T-cell (primary cell): ENCODE measurements at regions of chr14 and their contacts with region 1.

Region 1: DNA sequence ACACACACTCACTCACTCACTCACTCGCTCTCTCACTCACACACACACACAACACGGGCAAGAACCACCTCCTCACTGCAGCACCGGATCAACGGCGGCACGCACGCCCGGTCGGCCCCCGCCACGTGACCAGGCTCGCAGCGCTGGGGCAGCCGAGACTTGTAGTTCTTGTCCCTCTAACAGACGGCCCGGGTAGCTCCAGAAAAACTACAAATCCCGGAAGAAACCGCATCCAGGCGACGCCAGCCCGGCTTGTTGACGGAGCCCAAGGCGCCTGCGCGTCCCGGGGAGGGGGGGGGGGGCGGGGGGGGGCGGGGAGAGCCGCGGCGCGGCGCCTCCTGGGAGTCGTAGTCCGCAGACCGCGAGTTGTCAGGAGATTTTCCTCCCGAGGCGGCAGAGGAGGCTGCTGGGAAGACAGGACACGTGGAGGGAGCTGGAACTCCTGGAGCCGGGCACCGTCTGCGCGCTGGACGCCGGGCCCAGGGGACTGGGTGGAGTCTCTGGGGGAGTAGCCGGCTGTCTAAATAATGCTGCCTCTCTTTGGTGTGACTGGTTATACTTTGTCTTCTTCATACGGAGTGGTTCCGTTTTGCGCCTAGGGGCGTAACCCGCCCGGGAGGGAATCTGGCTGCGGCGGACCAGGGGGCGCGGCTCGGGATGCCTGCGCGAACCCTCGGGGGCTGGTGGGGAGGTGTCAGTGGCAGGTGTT is at the start of gene MAX:
- DNase-seq: peak; percentile 95 to 100 (median 99)
- ATAC-seq: peak; percentile 90 to 93 (median 92)
- H3K4me3 ChIP-seq: peak within 1 kb of the TSS; percentile 92 to 95
- H3K4me3 Mint-ChIP-seq: peak within 1 kb of the TSS; percentile 85 to 98 (median 89)
- H3K27ac ChIP-seq: peak within 1 kb of the TSS; percentile 97
- H3K27ac Mint-ChIP-seq: peak within 1 kb of the TSS; percentile 94 to 96
- H3K4me1 ChIP-seq: peaks cover 17 to 32% of the 10 kb centered on the region in 2 experiments
- H3K4me1 Mint-ChIP-seq: peaks cover 38 to 40% (median 38%) of the 10 kb centered on the region in 3 donors
- H3K27me3 ChIP-seq: no peaks in the 10 kb centered on the region
- H3K27me3 Mint-ChIP-seq: no peaks in the 10 kb centered on the region
- total RNA-seq, gene MAX: 174 to 216 (median 207) TPM

Region 2: GRCh38 chr14:64520701-64521100 is 581.9 kb before region 1 on chr14:
- CTCF ChIA-PET with region 1: no interaction called
- POLR2A ChIA-PET with region 1: no interaction called
- DNase-seq: no peak
- ATAC-seq: no peak
- H3K4me3 ChIP-seq: no peak overlapping the region
- H3K4me3 Mint-ChIP-seq: no peak overlapping the region
- H3K27ac ChIP-seq: no peak overlapping the region
- H3K27ac Mint-ChIP-seq: no peak overlapping the region
- H3K4me1 ChIP-seq: peaks cover 6 to 11% of the 10 kb centered on the region in 2 experiments
- H3K4me1 Mint-ChIP-seq: peaks cover 26 to 39% (median 35%) of the 10 kb centered on the region in 3 donors
- H3K27me3 ChIP-seq: no peaks in the 10 kb centered on the region
- H3K27me3 Mint-ChIP-seq: no peaks in the 10 kb centered on the region

Region 3: DNA sequence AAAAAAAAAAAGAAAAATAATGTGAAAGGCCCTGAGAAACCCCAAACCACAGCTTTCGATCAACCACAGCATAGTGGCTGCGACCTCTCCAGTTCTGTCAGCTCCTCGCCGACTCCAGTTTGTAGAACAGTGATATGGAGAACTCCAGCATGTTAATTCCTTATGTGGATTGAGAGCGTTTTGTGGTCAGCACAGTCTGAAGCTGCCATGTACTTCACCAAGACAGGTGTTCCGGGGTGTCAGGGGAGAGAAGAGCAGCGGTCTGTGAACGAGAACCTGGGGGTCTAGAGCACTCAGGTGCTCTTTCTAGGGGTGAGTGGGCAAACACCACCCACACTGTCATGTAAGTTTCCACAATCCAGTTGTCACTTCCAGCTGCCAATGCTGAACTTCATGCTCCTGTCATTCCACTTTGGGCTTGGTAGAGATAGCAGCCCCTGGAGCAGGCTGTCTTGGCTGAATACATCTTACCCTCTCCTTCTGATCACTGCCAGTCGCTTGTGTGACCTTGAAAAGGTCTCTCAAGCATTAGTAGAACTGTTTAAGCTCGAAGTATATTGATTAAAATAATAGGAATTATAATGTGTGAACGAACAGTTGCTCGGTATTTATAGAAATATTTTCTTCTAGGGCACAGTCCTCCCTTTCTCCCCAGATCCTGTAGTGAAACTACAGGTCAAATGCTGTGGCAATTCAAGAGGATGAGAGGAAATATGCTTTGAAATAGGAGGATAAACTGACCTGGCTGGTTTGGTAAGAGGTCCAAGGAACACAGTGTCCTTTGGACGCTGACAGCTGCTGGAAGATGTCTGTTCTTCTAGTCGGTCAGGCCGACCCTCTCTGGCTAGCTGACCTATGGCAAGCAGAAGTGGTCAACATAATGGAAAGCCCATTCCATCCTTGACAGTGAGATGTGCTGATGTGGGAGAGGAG is 15.4 kb after region 1 on chr14:
- CTCF ChIA-PET with region 1: no interaction called
- POLR2A ChIA-PET with region 1: interaction called in 1 of 2 experiments, 10 read pairs
- DNase-seq: no peak
- ATAC-seq: no peak
- H3K4me3 ChIP-seq: no peak overlapping the region
- H3K4me3 Mint-ChIP-seq: no peak overlapping the region
- H3K27ac ChIP-seq: no peak overlapping the region
- H3K27ac Mint-ChIP-seq: no peak overlapping the region
- H3K4me1 ChIP-seq: no peaks in the 10 kb centered on the region
- H3K4me1 Mint-ChIP-seq: no peaks in the 10 kb centered on the region
- H3K27me3 ChIP-seq: peaks cover 0 to 2% of the 10 kb centered on the region in 2 experiments
- H3K27me3 Mint-ChIP-seq: peaks cover 0 to 1% of the 10 kb centered on the region in 2 donors

Region 4: DNA sequence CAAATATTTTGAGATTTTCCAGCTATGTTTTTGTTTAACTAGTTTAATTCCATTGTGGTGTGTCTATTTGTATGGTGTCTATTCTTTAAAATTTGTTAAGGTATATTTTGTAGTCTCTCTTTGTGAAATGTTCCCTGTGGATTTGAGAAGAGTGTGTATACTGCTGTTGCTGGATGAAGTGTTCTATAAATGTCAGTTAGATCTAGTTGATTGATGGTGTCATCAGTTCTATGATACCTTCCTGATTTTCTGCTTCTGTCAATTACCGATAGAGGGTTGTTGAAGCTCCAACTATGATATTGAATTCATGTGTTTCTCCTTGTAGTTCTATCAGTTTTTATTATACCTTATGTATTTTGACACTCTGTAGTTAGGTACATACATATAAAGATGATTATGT is 363.0 kb after region 1 on chr14:
- CTCF ChIA-PET with region 1: no interaction called
- POLR2A ChIA-PET with region 1: interaction called in 1 of 2 experiments, 11 read pairs
- DNase-seq: no peak
- ATAC-seq: no peak
- H3K4me3 ChIP-seq: no peak overlapping the region
- H3K4me3 Mint-ChIP-seq: no peak overlapping the region
- H3K27ac ChIP-seq: no peak overlapping the region
- H3K27ac Mint-ChIP-seq: no peak overlapping the region
- H3K4me1 ChIP-seq: peaks cover 3 to 8% of the 10 kb centered on the region in 2 experiments
- H3K4me1 Mint-ChIP-seq: peaks cover 63 to 70% (median 68%) of the 10 kb centered on the region in 3 donors
- H3K27me3 ChIP-seq: no peaks in the 10 kb centered on the region
- H3K27me3 Mint-ChIP-seq: no peaks in the 10 kb centered on the region